WTC11 (cell line): ENCODE measurements at regions of chr4 and their contacts with region 1.

Region 1: GRCh38 chr4:140851032-140851636 is 94.9 kb upstream of the TBC1D9 start:
- DNase-seq: peak; percentile 34
- ATAC-seq: peak; percentile 72
- H3K4me3 Mint-ChIP-seq: no peak overlapping the region
- H3K27ac Mint-ChIP-seq: no peak overlapping the region
- H3K4me1 Mint-ChIP-seq: no peaks in the 10 kb centered on the region
- H3K27me3 Mint-ChIP-seq: no peaks in the 10 kb centered on the region; the same call in 1 of the 2 replicates
- CTCF ChIP-seq: peak; percentile 83

Region 2: DNA sequence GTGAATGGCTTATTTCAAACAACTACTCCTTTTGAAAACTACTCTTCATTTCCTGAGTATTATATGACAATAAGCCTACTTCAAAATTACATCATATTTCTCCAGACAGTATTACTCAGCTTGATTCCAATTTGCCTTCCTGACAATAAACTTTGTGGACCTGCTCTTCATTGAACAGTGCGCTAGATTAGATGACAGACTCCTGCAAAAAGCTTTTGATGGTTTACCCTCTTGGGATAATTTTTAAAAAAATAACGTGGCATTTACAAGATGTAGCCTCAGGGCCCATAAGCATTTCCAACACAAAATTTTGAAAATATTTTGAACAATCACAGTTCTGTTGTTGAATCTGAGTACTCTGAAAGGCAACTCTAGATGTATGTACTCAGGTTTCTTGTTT is 379.0 kb before region 1 on chr4:
- CTCF ChIA-PET with region 1: no interaction called
- POLR2A ChIA-PET with region 1: no interaction called
- DNase-seq: no peak
- ATAC-seq: no peak
- H3K4me3 Mint-ChIP-seq: no peak overlapping the region
- H3K27ac Mint-ChIP-seq: no peak overlapping the region
- H3K4me1 Mint-ChIP-seq: peaks cover 4% of the 10 kb centered on the region
- H3K27me3 Mint-ChIP-seq: peaks cover 4% of the 10 kb centered on the region; the same call in 1 of the 2 replicates
- CTCF ChIP-seq: no peak

Region 3: GRCh38 chr4:140641789-140642439 is 209.2 kb before region 1 on chr4:
- CTCF ChIA-PET with region 1: interaction called, 11 read pairs
- POLR2A ChIA-PET with region 1: no interaction called
- DNase-seq: peak; percentile 56
- ATAC-seq: peak; percentile 70
- H3K4me3 Mint-ChIP-seq: 0 out of 2 replicates have a peak overlapping the region, but pooled peaks have one; percentile 14
- H3K27ac Mint-ChIP-seq: peak overlapping the region; percentile 32; the same call in 1 of the 2 replicates
- H3K4me1 Mint-ChIP-seq: peaks cover 35% of the 10 kb centered on the region
- H3K27me3 Mint-ChIP-seq: no peaks in the 10 kb centered on the region
- CTCF ChIP-seq: no peak

Region 4: DNA sequence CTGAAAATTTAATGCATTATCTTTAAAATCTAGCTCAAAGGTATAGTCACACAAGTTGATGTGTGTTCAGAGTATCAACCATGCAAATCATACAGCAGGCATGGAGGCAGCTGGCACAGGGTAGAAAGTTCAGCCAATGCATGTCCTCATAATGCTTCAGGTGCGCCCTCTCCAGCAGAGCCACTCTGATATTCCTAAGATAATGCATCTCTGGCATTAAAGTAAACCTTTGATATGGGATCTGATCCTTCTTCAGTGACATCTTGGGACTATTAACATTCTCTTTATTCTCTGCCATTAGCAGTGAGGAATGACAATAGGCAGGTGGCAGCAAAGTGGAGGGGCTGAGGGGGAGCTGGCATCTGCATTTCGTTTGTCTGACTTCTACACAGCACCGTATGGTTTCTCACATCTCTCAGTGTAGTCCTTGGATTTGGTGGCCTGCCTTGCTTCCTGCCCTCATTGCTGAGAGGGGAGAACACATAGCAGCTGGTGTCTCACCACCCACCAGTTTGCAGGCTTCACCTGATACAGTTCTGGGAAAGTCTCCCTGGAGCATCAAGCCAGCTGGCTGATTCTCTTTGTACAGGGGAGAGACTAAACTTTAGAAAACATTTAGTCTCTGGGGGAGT is 73.7 kb after region 1 on chr4:
- CTCF ChIA-PET with region 1: no interaction called
- POLR2A ChIA-PET with region 1: no interaction called
- DNase-seq: no peak
- ATAC-seq: peak; percentile 88
- H3K4me3 Mint-ChIP-seq: no peak overlapping the region
- H3K27ac Mint-ChIP-seq: no peak overlapping the region
- H3K4me1 Mint-ChIP-seq: peaks cover 19% of the 10 kb centered on the region
- H3K27me3 Mint-ChIP-seq: no peaks in the 10 kb centered on the region; the same call in 1 of the 2 replicates
- CTCF ChIP-seq: no peak

Region 5: GRCh38 chr4:140982613-140983340 is 131.6 kb after region 1 on chr4:
- CTCF ChIA-PET with region 1: no interaction called
- POLR2A ChIA-PET with region 1: no interaction called
- DNase-seq: no peak
- ATAC-seq: no peak
- H3K4me3 Mint-ChIP-seq: no peak overlapping the region
- H3K27ac Mint-ChIP-seq: no peak overlapping the region
- H3K4me1 Mint-ChIP-seq: no peaks in the 10 kb centered on the region
- H3K27me3 Mint-ChIP-seq: no peaks in the 10 kb centered on the region
- CTCF ChIP-seq: no peak

Region 6: DNA sequence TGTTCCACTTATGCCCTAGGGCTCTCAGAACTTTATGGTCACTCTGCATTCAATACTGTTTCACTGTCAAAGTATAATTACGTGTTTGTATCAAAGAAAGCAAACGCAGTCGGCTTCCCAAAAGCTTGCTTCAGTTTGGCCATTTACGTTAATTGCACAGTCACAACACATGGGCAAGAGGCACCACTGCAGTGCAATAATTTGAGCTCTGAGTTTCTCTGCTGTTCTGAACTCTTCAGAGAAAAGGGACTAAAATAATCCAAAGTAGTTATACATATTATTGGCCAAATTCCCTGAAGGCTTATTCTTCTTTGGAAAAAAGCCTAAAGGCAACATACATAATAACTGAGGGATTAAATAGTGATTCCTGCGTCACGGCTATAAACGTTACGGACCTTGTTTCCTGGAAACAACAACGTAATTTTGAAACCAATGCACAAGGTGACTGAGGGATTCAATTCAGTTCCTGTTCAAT is 230.8 kb after region 1 on chr4:
- CTCF ChIA-PET with region 1: no interaction called
- POLR2A ChIA-PET with region 1: no interaction called
- DNase-seq: no peak
- ATAC-seq: no peak
- H3K4me3 Mint-ChIP-seq: no peak overlapping the region
- H3K27ac Mint-ChIP-seq: no peak overlapping the region
- H3K4me1 Mint-ChIP-seq: peaks cover 21% of the 10 kb centered on the region
- H3K27me3 Mint-ChIP-seq: no peaks in the 10 kb centered on the region
- CTCF ChIP-seq: no peak